T-cell (primary cell): ENCODE measurements at regions of chr12 and their contacts with region 1.

Region 1: GRCh38 chr12:53213348-53213747 is 6.3 kb upstream of the ITGB7 start:
- DNase-seq: peak; percentile 57 to 91 (median 78)
- ATAC-seq: peak; percentile 65 to 82 (median 67)
- H3K4me3 ChIP-seq: no peak overlapping the region
- H3K4me3 Mint-ChIP-seq: no peak overlapping the region
- H3K27ac ChIP-seq: peak overlapping the region; percentile 20
- H3K27ac Mint-ChIP-seq: peak overlapping the region; percentile 64 to 78
- H3K4me1 ChIP-seq: peaks cover 31 to 87% of the 10 kb centered on the region in 2 experiments
- H3K4me1 Mint-ChIP-seq: peaks cover 78 to 81% (median 79%) of the 10 kb centered on the region in 3 donors
- H3K27me3 ChIP-seq: no peaks in the 10 kb centered on the region
- H3K27me3 Mint-ChIP-seq: no peaks in the 10 kb centered on the region

Region 2: DNA sequence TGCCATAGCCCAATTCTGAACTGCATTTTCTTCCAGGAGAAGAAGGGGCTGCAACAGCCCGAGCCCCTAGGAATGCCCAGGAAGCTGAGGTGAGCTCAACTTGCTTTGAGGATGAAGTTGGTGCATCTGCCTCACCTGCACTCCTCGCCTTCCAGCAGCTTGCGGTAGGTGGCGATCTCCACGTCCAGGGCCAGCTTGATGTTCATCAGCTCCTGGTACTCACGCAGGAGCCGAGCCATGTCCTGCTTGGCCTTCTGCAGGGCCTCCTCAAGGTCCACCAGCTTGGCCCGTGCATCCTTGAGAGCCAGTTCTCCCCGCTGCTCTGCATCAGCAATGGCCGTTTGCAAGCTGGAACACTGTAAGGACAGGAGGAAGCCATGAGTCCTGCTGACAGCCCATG is 785.2 kb before region 1 on chr12:
- CTCF ChIA-PET with region 1: no interaction called
- POLR2A ChIA-PET with region 1: no interaction called
- DNase-seq: no peak
- ATAC-seq: no peak
- H3K4me3 ChIP-seq: no peak overlapping the region
- H3K4me3 Mint-ChIP-seq: no peak overlapping the region
- H3K27ac ChIP-seq: no peak overlapping the region
- H3K27ac Mint-ChIP-seq: no peak overlapping the region
- H3K4me1 ChIP-seq: no peaks in the 10 kb centered on the region
- H3K4me1 Mint-ChIP-seq: no peaks in the 10 kb centered on the region
- H3K27me3 ChIP-seq: peaks cover 0 to 37% of the 10 kb centered on the region in 2 experiments
- H3K27me3 Mint-ChIP-seq: peaks cover 33 to 50% of the 10 kb centered on the region in 2 donors

Region 3: GRCh38 chr12:53251477-53252348 is 38.4 kb after region 1 on chr12:
- CTCF ChIA-PET with region 1: interaction called, 8 to 22 read pairs
- POLR2A ChIA-PET with region 1: interaction called in 1 of 2 experiments, 3 read pairs
- DNase-seq: peak; percentile 32 to 82 (median 60)
- ATAC-seq: peak; percentile 86 to 91 (median 88)
- H3K4me3 ChIP-seq: peak overlapping the region; percentile 63 to 76
- H3K4me3 Mint-ChIP-seq: peak overlapping the region; percentile 85 to 99 (median 96)
- H3K27ac ChIP-seq: peak overlapping the region; percentile 62
- H3K27ac Mint-ChIP-seq: peak overlapping the region; percentile 96 to 97
- H3K4me1 ChIP-seq: peaks cover 26 to 51% of the 10 kb centered on the region in 2 experiments
- H3K4me1 Mint-ChIP-seq: peaks cover 38 to 53% (median 46%) of the 10 kb centered on the region in 3 donors
- H3K27me3 ChIP-seq: no peaks in the 10 kb centered on the region
- H3K27me3 Mint-ChIP-seq: no peaks in the 10 kb centered on the region

Region 4: DNA sequence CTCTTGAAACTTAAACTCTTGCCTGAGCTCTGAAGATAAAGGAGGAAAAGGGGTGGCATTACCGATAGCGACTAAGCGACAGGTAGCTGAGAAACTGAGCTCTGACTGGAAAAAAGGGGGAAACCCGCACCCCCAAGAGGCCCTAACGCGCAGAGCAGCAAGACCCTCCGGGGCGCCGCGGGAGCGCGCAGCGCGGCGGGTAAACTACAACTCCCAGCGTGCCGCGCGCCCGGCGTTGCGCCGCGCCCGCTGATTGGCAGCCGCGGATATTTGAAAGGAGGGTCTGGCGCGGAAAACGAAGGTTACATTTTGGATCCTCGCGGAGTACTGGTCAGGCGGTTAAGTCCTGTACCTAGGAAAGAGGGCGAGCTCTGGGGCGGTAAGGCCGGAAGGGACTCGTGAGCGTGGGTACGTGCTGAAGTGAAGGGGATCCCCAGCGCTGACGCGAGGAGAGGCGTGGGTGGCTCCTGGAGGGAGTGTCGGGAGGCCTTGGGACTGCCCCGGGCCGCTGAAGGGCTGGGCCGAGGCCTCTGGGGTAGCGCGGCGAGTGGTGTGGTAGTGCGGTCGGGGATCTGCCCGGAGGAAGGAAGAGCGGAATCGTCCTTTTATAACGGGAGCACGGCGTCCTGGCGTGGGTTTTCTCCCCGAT is 54.8 kb after region 1 on chr12 and contains the start of gene ESPL1:
- CTCF ChIA-PET with region 1: interaction called, 10 to 34 read pairs
- POLR2A ChIA-PET with region 1: interaction called in 1 of 2 experiments, 3 read pairs
- DNase-seq: peak; percentile 68 to 89 (median 76)
- ATAC-seq: peak; percentile 91 to 96 (median 94)
- H3K4me3 ChIP-seq: peak within 1 kb of the TSS; percentile 81 to 92
- H3K4me3 Mint-ChIP-seq: peak within 1 kb of the TSS; percentile 89 to 98 (median 92)
- H3K27ac ChIP-seq: peak within 1 kb of the TSS; percentile 71
- H3K27ac Mint-ChIP-seq: peak within 1 kb of the TSS; percentile 75 to 91
- H3K4me1 ChIP-seq: peaks cover 0 to 16% of the 10 kb centered on the region in 2 experiments
- H3K4me1 Mint-ChIP-seq: peaks cover 20 to 22% (median 21%) of the 10 kb centered on the region in 3 donors
- H3K27me3 ChIP-seq: no peaks in the 10 kb centered on the region
- H3K27me3 Mint-ChIP-seq: peaks cover 0 to 3% of the 10 kb centered on the region in 2 donors
- total RNA-seq, gene ESPL1: 1.2 to 2.5 (median 1.6) TPM

Region 5: GRCh38 chr12:53295070-53295890 is 81.9 kb after region 1 on chr12 and contains the start of gene PFDN5:
- CTCF ChIA-PET with region 1: interaction called, 3 to 11 read pairs
- POLR2A ChIA-PET with region 1: no interaction called
- DNase-seq: peak; percentile 64 to 93 (median 86)
- ATAC-seq: peak; percentile 89 to 94 (median 92)
- H3K4me3 ChIP-seq: peak within 1 kb of the TSS; percentile 88 to 96
- H3K4me3 Mint-ChIP-seq: peak within 1 kb of the TSS; percentile 98 to 99 (median 98)
- H3K27ac ChIP-seq: peak within 1 kb of the TSS; percentile 76
- H3K27ac Mint-ChIP-seq: peak within 1 kb of the TSS; percentile 96 to 99
- H3K4me1 ChIP-seq: peaks cover 8 to 40% of the 10 kb centered on the region in 2 experiments
- H3K4me1 Mint-ChIP-seq: peaks cover 49 to 54% (median 51%) of the 10 kb centered on the region in 3 donors
- H3K27me3 ChIP-seq: no peaks in the 10 kb centered on the region
- H3K27me3 Mint-ChIP-seq: no peaks in the 10 kb centered on the region
- total RNA-seq, gene PFDN5: 591 to 643 (median 612) TPM